GM10248 (cell line): ENCODE measurements at regions of chr3 and their contacts with region 1.

Region 1: GRCh38 chr3:157201648-157202278 is 41.8 kb upstream of the CCNL1 start:
- DNase-seq: peak; percentile 60
- CTCF ChIP-seq: peak; percentile 57

Region 2: DNA sequence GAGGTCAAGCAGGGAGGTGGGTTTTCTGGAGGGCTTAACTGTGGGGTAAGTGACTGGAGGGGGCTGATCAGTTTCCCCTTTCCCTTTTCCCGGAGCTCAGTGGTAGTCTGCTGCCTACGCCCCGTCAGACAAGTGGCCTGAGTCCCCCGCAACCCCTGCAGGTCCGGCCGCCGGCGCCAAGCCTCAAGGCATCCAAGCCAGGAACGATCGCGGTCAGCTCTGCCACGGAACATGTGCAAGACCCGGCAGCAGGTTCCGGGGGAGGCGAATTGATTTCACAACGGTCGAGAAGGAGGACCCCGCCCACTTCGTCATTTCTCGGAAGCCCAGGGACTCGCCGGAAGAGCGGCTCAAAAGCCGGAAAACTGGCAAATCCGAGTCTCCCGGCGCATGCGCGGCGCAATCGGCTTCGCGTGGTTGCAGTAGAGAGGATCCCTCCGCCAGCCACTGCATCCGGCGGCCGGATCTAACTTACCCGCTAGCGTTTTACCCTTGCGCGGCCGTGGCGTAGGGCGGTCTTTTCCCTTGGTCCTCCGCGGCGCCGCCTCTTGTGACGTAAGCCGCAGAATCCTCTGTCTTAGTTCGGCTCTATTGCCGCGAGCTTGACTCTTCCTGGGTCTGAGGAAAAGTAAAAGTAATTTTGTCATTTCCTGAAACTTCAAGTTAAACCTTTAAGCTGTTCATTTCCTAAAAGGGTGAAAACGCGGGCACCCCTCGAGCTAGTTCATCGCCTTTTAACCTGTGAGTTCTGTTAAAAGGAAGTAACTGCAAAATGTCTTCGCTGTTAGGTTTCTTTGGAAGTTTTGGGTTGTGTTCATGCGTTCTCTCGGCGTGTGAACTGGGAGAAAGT is 26.9 kb before region 1 on chr3:
- CTCF ChIA-PET with region 1: interaction called, 18 read pairs
- POLR2A ChIA-PET with region 1: no interaction called
- DNase-seq: peak; percentile 96
- CTCF ChIP-seq: no peak

Region 3: GRCh38 chr3:157180262-157180661 is 21.5 kb before region 1 on chr3:
- CTCF ChIA-PET with region 1: interaction called, 18 read pairs
- POLR2A ChIA-PET with region 1: no interaction called
- DNase-seq: no peak
- CTCF ChIP-seq: no peak